ENCODE measurements at regions of chr4 and their contacts with region 1.

Region 1: GRCh38 chr4:142703694-142704309 is 142.3 kb downstream of the INPP4B start:
- DNase-seq: peak in 7 of 9 donors; percentile 51 to 71 (median 58)
- ATAC-seq: peak; percentile 76
- H3K4me3 ChIP-seq: peak overlapping the region; percentile 14
- H3K4me3 Mint-ChIP-seq: no peak overlapping the region
- H3K27ac ChIP-seq: peak overlapping the region; percentile 54
- H3K27ac Mint-ChIP-seq: no peak overlapping the region
- H3K4me1 ChIP-seq: peaks cover 51 to 94% of the 10 kb centered on the region in 2 donors
- H3K4me1 Mint-ChIP-seq: peaks cover 20 to 35% (median 32%) of the 10 kb centered on the region in 7 donors
- H3K27me3 ChIP-seq: no peaks in the 10 kb centered on the region
- H3K27me3 Mint-ChIP-seq: no peaks in the 10 kb centered on the region

Region 2: GRCh38 chr4:142656178-142656577 is 47.6 kb before region 1 on chr4:
- CTCF ChIA-PET with region 1: interaction called, 3 read pairs
- POLR2A ChIA-PET with region 1: interaction called, 4 read pairs
- intact Hi-C with region 1: loop called in 1 of 2 experiments (anchors 5 kb)
- DNase-seq: peak in 6 of 9 donors; percentile 6 to 40 (median 30)
- ATAC-seq: no peak
- H3K4me3 ChIP-seq: no peak overlapping the region
- H3K4me3 Mint-ChIP-seq: no peak overlapping the region
- H3K27ac ChIP-seq: no peak overlapping the region
- H3K27ac Mint-ChIP-seq: no peak overlapping the region
- H3K4me1 ChIP-seq: no peaks in the 10 kb centered on the region
- H3K4me1 Mint-ChIP-seq: no peaks in the 10 kb centered on the region
- H3K27me3 ChIP-seq: no peaks in the 10 kb centered on the region
- H3K27me3 Mint-ChIP-seq: no peaks in the 10 kb centered on the region

Region 3: DNA sequence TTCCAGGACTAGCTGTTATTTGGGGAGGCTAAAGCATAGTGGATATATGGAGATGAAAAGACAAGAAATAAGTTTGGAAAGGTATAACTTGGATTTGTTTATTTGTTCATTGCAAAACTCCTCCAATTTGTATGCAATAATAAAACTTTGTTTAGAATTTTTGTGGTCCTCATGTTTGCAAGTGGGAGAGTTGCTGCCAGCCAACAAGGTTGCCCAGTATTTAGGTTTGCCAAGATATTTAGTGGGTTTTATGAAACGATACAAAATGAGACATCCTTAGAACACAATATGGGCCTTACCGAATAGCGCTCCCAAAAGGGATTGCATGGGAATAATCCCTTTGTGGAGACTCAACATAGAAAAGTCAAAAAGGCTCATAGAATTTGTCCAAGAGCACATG is 19.8 kb before region 1 on chr4:
- CTCF ChIA-PET with region 1: no interaction called
- POLR2A ChIA-PET with region 1: interaction called, 5 read pairs
- intact Hi-C with region 1: loop called in 1 of 2 experiments (anchors 1 kb)
- DNase-seq: no peak
- ATAC-seq: no peak
- H3K4me3 ChIP-seq: no peak overlapping the region
- H3K4me3 Mint-ChIP-seq: no peak overlapping the region
- H3K27ac ChIP-seq: no peak overlapping the region
- H3K27ac Mint-ChIP-seq: no peak overlapping the region
- H3K4me1 ChIP-seq: no peaks in the 10 kb centered on the region
- H3K4me1 Mint-ChIP-seq: peaks cover 9 to 32% (median 26%) of the 10 kb centered on the region in 7 donors
- H3K27me3 ChIP-seq: no peaks in the 10 kb centered on the region
- H3K27me3 Mint-ChIP-seq: no peaks in the 10 kb centered on the region